ENCODE measurements at regions of chr2 and their contacts with region 1.

Region 1: DNA sequence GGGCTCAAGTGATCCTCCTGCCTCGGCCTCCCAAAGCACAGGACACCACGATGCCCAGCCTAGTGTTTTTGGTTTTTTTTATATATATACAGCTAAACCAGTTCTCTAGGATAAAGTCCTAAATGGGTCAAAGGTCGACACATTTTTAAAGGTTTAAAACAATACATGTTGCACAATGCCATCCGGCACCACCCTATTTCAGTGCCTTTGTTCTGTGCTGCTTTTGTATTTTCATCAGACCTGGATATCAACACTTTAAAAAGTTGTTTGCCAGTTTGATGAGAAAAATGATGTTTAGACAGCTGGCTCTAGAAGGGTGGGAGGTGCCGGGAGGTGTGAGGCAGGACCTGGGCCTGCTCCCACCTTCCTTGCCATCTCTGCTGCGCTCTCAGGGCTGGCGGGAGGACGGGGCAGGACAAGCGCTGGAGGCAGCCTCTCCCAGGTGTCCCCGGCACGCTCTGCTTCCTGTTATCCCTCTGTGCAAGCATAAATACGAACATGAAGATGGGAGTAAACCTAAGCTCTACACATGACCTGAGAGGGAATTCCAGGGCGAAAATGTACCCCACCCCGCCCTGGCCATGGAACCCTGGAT is 103.7 kb downstream of the HS6ST1 start:
- DNase-seq: no peak
- ATAC-seq: no peak
- H3K4me3 ChIP-seq: no peak overlapping the region
- H3K27ac ChIP-seq: no peak overlapping the region
- H3K4me1 ChIP-seq: peaks cover 4% of the 10 kb centered on the region
- H3K27me3 ChIP-seq: no peaks in the 10 kb centered on the region
- CTCF ChIP-seq: no peak

Region 2: GRCh38 chr2:128262315-128263253 is 47.6 kb after region 1 on chr2:
- CTCF ChIA-PET with region 1: interaction called, 14 read pairs
- POLR2A ChIA-PET with region 1: no interaction called
- intact Hi-C with region 1: no loop called
- DNase-seq: no peak
- ATAC-seq: no peak
- H3K4me3 ChIP-seq: no peak overlapping the region
- H3K27ac ChIP-seq: no peak overlapping the region
- H3K4me1 ChIP-seq: no peaks in the 10 kb centered on the region; the same call in 1 of the 2 replicates
- H3K27me3 ChIP-seq: no peaks in the 10 kb centered on the region
- CTCF ChIP-seq: no peak

Measured in PC-3 (cell line).